Esophagus muscularis mucosa (tissue), 4 donors: ENCODE measurements at regions of chr1 and their contacts with region 1.

Region 1: DNA sequence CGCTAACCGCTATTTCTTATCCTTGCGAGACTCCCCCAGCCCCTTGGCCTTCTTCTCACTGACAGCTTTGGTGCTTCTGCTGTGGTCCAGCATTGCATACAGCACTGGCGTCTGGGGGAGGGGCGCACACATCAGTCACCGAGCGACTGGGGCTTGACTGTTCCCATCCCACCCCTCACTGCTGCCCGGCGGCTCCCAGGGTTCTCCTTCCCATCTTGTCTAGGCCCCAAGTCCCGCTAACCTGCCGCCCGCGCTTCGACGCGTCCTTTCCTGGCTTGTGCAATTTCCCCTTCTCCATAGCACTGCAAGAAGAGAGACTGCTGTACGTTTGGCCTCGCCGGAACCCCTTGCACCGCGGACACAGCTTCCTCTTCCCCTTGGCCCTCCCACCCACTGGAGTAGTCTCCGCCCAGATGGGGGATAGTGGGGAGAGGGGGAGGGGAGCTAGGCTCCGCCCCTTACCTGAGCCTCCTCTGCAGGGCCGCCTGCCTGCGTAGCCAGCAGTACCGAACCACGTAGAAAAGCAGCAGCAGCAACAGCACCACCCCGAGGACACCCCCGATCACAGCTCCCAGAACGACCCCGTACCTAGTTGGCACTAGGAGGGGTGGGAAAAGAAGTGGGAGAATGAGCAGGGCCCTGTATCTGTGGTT is 3.8 kb downstream of the MPZ start:
- DNase-seq: peak; percentile 93
- H3K4me3 ChIP-seq: peak overlapping the region; percentile 65 to 84 (median 70)
- H3K27ac ChIP-seq: peak overlapping the region; percentile 35 to 66 (median 50)
- H3K4me1 ChIP-seq: peaks cover 20 to 36% (median 32%) of the 10 kb centered on the region in 4 donors
- H3K27me3 ChIP-seq: peaks cover 0 to 8% (median 0%) of the 10 kb centered on the region in 4 donors
- CTCF ChIP-seq: peak in 2 of 3 experiments; percentile 31 to 37
- EP300 ChIP-seq: no peak
- POLR2A ChIP-seq: no peak

Region 2: DNA sequence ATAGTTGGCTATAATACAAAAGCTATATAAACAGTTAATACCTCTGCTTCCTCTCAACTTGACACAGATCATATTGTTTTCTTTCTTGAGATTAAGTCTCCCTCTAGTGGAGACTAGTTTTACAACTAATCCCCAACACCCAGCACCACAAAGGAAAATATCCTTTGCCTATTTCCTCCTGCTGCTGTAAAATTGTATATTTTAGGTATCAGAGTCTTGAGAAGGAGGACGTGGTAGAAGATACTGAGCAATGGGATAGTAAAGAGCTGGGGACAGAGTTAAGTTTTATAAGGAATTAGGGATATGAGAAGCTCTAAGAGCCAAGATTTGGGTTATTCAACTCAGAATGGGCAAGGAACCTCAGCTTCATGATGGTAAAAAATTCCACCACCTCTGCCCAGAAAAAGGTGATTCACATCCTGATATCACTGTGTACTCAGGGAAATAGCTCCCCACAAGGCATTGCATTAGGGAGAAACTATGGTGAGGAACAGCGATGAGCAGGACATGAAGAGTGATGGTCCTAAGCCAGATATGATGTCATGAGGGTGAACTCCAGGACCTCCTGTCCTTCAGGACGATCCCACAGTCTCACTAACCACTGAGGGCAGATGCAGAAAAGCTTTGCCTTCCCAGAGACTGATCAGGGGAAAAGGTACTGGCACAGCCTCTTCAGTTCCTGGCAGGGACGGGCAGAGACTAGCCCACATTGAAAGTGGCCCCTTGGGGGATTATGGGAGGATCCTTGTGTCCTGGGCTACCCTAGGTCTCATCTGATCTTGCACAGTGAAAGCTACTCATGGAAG is 76.4 kb after region 1 on chr1:
- intact Hi-C with region 1: loop called (anchors 5 kb)
- DNase-seq: no peak
- H3K4me3 ChIP-seq: no peak overlapping the region
- H3K27ac ChIP-seq: peak overlapping the region; percentile 57 to 72 (median 58)
- H3K4me1 ChIP-seq: peaks cover 4 to 22% (median 12%) of the 10 kb centered on the region in 4 donors
- H3K27me3 ChIP-seq: no peaks in the 10 kb centered on the region
- CTCF ChIP-seq: peak; percentile 67 to 75 (median 69)
- EP300 ChIP-seq: peak; percentile 45
- POLR2A ChIP-seq: peak; percentile 3

Region 3: DNA sequence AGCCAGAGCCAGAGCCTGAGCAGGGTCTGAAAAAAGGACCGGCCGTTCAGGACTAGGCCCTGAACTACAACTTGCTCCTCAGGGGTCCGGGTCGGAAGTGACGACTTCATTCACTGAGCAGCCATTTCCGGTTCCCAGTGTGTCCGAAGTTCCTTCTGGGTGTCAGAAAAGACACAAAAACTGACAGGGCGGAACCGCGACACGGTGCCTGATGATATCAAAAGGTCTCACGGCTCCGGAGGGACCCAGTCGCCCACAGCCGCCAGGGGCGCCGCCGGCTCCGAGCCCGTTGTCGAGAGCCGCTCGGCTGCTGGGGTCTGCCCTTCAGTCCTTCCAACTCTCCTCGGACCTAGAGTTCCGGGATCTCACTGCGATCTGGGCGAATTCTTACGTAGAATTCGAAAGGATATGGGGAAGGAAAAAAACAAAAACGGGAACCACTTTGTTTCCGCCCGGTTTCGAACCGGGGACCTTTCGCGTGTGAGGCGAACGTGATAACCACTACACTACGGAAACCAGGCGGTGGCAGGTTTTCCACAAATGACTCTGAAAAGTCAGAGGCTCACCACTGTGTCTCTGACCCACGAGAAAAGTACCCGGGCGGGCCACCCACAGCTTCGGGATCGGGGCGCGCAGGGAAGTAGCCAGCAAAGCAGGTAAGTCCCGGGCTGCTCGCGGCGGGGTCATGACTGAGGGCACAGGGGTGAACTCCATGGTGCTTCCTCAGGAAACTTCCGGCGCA is 93.4 kb after region 1 on chr1:
- intact Hi-C with region 1: no loop called
- DNase-seq: peak; percentile 99
- H3K4me3 ChIP-seq: peak overlapping the region; percentile 84 to 96 (median 90)
- H3K27ac ChIP-seq: peak overlapping the region; percentile 100
- H3K4me1 ChIP-seq: peaks cover 14 to 17% (median 14%) of the 10 kb centered on the region in 4 donors
- H3K27me3 ChIP-seq: no peaks in the 10 kb centered on the region
- CTCF ChIP-seq: peak; percentile 14 to 43 (median 33)
- EP300 ChIP-seq: no peak
- POLR2A ChIP-seq: no peak

Region 4: DNA sequence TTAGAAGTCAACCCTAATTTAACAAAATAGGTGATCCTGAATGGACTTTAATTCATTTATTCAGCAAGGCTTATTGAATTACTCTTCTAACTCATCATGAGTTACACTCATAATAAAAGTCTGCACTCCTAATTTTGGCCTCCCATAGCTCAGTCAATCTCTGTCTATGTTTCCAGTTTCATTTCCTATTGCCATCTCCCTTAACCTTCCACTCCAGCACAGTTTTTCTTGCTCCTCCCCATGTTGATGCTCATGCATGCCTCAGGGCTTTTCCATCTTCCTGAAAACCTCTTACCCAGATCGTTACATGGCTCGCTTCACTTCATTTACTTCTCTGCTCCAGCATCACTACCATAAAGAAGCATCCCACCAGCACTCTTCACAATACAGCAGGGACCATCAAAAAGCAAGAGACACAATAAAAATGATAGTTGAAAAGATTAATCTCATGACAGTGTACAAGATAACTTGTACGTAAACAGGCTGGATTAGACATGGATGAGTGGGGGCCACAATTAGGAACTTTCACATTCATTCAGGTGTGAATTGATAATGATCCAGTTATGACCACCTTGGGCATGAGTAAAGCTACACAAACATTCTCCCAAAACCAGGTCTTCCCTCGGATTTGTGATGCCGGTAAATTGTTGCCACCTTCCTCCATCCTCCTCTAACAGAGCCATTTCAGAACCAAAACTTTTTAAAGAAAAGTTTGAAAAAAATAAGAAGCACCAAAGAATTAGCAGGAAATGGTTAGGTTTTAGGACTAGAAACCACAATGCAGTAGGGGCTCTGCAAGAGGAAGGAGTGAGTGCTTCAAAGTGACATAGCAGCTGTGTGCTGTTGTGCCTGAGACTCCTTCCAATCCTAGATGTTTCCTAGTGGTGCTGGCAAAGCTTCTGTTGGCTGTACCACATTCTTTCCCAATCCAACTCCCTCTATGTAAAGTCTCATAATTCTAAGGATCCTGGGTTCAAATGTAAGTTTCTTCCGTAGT is 627.9 kb after region 1 on chr1:
- intact Hi-C with region 1: no loop called
- DNase-seq: no peak
- H3K4me3 ChIP-seq: no peak overlapping the region
- H3K27ac ChIP-seq: no peak overlapping the region
- H3K4me1 ChIP-seq: no peaks in the 10 kb centered on the region
- H3K27me3 ChIP-seq: no peaks in the 10 kb centered on the region
- CTCF ChIP-seq: no peak
- EP300 ChIP-seq: no peak
- POLR2A ChIP-seq: no peak